ENCODE measurements at regions of chr2 and their contacts with region 1.

Region 1: DNA sequence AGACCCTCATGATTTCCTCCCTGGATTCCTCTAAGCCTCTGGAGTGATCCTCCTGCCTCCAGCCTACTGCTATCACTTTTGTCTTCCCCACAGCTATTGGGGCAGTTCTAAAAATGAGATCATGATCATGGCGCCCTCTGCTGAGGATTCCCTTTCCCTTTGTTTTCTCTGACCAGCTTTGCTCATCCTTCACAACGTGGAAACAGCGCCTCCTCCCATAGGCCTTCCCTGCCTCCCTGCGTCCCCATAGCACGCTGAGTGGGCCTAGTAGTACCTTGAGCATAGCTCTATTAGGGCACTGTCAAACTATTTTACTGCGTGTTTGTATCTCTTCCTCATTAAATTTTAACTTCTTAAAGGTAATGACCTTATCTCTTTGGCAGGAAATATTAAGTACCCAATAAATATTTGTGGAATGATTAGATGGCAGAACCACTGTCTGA is 207.0 kb upstream of the FANCL start:
- DNase-seq: peak; percentile 83
- ATAC-seq: peak; percentile 100
- H3K4me3 ChIP-seq: no peak overlapping the region
- H3K27ac ChIP-seq: no peak overlapping the region
- H3K4me1 ChIP-seq: no peaks in the 10 kb centered on the region
- H3K27me3 ChIP-seq: no peaks in the 10 kb centered on the region
- CTCF ChIP-seq: peak; percentile 97
- EP300 ChIP-seq: no peak
- POLR2A ChIP-seq: no peak
- RAD21 ChIP-seq: peak; percentile 88

Region 2: GRCh38 chr2:57720728-57721627 is 727.1 kb before region 1 on chr2:
- CTCF ChIA-PET with region 1: no interaction called
- POLR2A ChIA-PET with region 1: no interaction called
- in situ Hi-C with region 1: no loop called
- intact Hi-C with region 1: loop called (anchors 1 kb)
- DNase-seq: peak; percentile 56
- ATAC-seq: peak; percentile 100
- H3K4me3 ChIP-seq: peak overlapping the region in 1 of 3 experiments; percentile 19; a peak in 1 of 6 replicates
- H3K27ac ChIP-seq: no peak overlapping the region
- H3K4me1 ChIP-seq: no peaks in the 10 kb centered on the region
- H3K27me3 ChIP-seq: no peaks in the 10 kb centered on the region
- CTCF ChIP-seq: peak; percentile 85
- EP300 ChIP-seq: no peak
- POLR2A ChIP-seq: no peak
- RAD21 ChIP-seq: peak; percentile 53

Region 3: GRCh38 chr2:57759822-57760300 is 688.2 kb before region 1 on chr2:
- CTCF ChIA-PET with region 1: interaction called, 25 read pairs
- POLR2A ChIA-PET with region 1: no interaction called
- in situ Hi-C with region 1: loop called (anchors 10 kb)
- intact Hi-C with region 1: loop called (anchors 1 kb)
- DNase-seq: peak; percentile 63
- ATAC-seq: peak; percentile 100
- H3K4me3 ChIP-seq: peak overlapping the region in 1 of 3 experiments; percentile 54; a peak in 2 of 6 replicates
- H3K27ac ChIP-seq: no peak overlapping the region
- H3K4me1 ChIP-seq: peaks cover 15% of the 10 kb centered on the region
- H3K27me3 ChIP-seq: peaks cover 0 to 6% of the 10 kb centered on the region in 2 experiments; a peak in 1 of 5 replicates
- CTCF ChIP-seq: peak; percentile 98
- EP300 ChIP-seq: no peak
- POLR2A ChIP-seq: no peak
- RAD21 ChIP-seq: peak; percentile 97

Region 4: DNA sequence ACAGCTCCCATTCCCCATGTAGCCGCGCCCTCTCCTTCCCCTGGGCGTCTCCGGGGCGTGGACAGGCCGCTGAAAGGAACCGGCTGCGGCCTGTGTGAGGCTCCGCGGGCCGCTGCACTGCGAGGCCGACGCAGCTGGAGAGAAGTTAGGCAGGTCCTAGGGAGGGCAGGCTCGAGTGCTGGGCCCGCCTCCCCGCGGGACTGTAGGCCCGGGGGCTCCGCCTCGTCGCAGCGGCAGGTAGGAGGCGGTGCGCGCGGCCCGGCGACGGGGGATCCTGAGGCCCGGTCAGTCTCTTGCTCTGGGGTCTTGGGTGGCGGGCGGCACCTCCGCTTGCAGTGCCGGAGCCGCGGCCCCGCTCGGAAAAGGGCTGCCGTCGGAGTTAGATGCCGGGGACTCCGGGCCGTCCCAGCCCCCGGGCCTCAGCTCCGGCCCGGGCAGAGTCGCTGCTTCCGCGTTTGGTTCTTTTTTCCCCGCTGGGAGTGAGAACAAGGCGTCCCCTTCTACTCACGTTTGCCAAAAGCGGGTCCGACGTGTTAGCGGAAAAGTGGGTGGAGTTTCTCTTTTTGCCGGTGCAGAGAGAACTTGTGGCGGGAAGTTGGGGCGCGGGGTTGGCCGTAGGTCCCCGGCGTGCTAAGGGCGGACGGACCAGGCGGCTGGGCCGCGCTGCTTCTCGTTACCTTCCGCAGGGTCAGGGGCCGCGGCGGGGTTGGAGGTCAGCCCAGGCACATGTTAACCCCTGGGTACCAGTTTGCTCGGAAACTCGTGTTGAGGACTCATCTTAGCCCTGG is 401.3 kb before region 1 on chr2 and contains the start of gene VRK2:
- CTCF ChIA-PET with region 1: no interaction called
- POLR2A ChIA-PET with region 1: no interaction called
- in situ Hi-C with region 1: no loop called
- intact Hi-C with region 1: loop called (anchors 5 kb)
- DNase-seq: peak; percentile 91
- ATAC-seq: peak; percentile 97
- H3K4me3 ChIP-seq: peak within 1 kb of the TSS; percentile 59 to 76 (median 65)
- H3K27ac ChIP-seq: peak within 1 kb of the TSS; percentile 92
- H3K4me1 ChIP-seq: peaks cover 48% of the 10 kb centered on the region
- H3K27me3 ChIP-seq: no peaks in the 10 kb centered on the region; a peak in 1 of 5 replicates
- CTCF ChIP-seq: peak; percentile 52
- EP300 ChIP-seq: 0 out of 4 replicates have a peak, but pooled peaks have one; percentile 7 to 11
- POLR2A ChIP-seq: peak; percentile 86 to 91
- RAD21 ChIP-seq: peak; percentile 45
- total RNA-seq, gene VRK2: 29.1 and 41.1 TPM in 2 replicates

Region 5: DNA sequence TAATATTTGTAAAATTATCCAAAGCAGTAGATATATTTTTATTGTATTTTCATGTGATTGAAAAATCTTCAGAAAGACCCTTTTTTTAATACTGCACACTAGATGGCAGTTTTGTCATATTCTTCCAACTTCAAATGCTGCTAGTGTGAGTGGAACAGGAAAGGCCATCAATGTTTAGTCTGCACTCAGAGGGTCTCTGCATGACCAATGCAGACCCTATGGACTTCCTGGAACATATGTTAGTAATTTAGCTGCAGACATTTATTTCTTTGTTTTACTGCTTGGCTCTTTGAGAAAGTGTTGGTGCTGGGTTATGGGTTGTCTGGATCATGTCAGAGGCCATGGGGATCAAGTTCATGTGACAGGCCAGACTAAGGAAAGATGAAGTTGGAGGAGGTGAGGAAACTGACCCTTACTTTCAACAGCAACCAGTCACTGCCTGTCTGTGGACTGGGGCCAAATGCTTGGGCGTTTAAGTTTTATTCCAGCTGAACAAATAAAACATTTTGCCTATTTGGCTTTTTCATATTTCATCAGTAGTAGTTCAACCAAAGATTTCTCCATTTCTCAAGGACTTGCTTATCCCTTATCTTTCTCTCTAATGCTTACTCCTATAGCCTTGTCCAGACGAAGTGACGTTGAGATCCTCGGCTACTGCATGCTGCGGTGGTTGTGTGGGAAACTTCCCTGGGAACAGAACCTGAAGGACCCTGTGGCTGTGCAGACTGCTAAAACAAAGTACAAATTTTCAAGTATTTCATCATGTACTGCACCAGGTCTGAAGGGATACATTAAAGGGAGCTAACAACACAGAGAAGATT is 316.7 kb before region 1 on chr2:
- CTCF ChIA-PET with region 1: interaction called, 12 read pairs
- POLR2A ChIA-PET with region 1: no interaction called
- in situ Hi-C with region 1: loop called (anchors 5 kb)
- intact Hi-C with region 1: loop called (anchors 1 kb)
- DNase-seq: peak; percentile 15
- ATAC-seq: peak; percentile 64
- H3K4me3 ChIP-seq: no peak overlapping the region
- H3K27ac ChIP-seq: no peak overlapping the region
- H3K4me1 ChIP-seq: no peaks in the 10 kb centered on the region
- H3K27me3 ChIP-seq: no peaks in the 10 kb centered on the region
- CTCF ChIP-seq: peak; percentile 59
- EP300 ChIP-seq: no peak
- POLR2A ChIP-seq: no peak
- RAD21 ChIP-seq: peak; percentile 48; the same call in 1 of the 2 replicates

Region 6: DNA sequence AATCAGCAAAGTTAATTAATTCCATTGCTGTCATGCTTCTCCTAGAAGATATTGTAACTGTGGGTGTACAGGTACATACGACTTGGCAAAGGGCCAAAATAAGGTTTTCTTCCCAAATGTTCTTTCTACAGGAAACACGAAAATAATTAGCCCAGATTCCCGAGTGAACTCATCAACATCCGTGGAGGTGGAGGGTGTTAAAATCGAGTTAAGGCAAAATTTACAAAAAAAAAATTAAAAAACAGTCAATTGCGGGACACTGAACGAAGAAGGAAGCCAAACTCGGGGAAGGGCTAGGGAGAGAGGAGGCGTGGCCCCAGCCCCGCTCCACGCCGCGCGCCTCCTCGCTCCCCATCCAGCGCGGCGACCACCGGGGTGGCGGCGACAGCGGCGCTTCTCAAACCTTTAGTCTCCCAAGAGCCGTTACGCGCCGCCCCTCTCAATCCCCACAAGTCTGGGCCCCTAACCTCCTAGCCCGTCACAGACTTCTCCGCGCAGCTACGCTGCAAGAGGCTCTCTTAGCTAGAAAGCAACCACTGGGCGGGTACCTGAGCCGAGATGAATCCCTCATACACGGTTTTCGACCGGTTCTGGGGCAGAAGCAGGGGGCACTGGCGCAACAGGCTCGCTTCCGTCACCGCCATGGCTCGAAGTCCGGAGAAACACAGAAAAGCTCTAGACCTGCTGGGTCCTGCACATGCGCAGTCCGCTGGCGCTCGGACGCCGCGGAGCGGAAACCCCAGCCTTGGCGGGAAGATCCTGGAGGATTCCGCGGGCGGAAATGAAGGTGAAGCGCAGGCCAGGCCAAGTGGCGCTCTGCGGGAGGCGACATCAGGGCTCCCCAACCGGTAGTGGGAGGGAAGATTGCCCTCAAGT is 207.2 kb before region 1 on chr2 and contains the start of gene FANCL:
- CTCF ChIA-PET with region 1: no interaction called
- POLR2A ChIA-PET with region 1: no interaction called
- in situ Hi-C with region 1: no loop called
- intact Hi-C with region 1: loop called (anchors 5 kb)
- DNase-seq: peak; percentile 94
- ATAC-seq: peak; percentile 97
- H3K4me3 ChIP-seq: peak within 1 kb of the TSS; percentile 67 to 88 (median 86)
- H3K27ac ChIP-seq: peak within 1 kb of the TSS; percentile 95
- H3K4me1 ChIP-seq: peaks cover 36% of the 10 kb centered on the region
- H3K27me3 ChIP-seq: peaks cover 0 to 5% of the 10 kb centered on the region in 2 experiments; a peak in 1 of 5 replicates
- CTCF ChIP-seq: peak; percentile 44; the same call in 1 of the 2 replicates
- EP300 ChIP-seq: peak; percentile 56 to 59; a peak in 3 of 4 replicates
- POLR2A ChIP-seq: peak; percentile 94 to 98
- RAD21 ChIP-seq: peak; percentile 49; the same call in 1 of the 2 replicates
- total RNA-seq, gene FANCL: 40.7 and 40.9 TPM in 2 replicates

Measured in HepG2 (cell line).